Activated CD4-positive, alpha-beta memory T cell treated with anti-CD3 and anti-CD28 coated beads for 36 hours (primary cell): ENCODE measurements at regions of chr6 and their contacts with region 1.

Region 1: DNA sequence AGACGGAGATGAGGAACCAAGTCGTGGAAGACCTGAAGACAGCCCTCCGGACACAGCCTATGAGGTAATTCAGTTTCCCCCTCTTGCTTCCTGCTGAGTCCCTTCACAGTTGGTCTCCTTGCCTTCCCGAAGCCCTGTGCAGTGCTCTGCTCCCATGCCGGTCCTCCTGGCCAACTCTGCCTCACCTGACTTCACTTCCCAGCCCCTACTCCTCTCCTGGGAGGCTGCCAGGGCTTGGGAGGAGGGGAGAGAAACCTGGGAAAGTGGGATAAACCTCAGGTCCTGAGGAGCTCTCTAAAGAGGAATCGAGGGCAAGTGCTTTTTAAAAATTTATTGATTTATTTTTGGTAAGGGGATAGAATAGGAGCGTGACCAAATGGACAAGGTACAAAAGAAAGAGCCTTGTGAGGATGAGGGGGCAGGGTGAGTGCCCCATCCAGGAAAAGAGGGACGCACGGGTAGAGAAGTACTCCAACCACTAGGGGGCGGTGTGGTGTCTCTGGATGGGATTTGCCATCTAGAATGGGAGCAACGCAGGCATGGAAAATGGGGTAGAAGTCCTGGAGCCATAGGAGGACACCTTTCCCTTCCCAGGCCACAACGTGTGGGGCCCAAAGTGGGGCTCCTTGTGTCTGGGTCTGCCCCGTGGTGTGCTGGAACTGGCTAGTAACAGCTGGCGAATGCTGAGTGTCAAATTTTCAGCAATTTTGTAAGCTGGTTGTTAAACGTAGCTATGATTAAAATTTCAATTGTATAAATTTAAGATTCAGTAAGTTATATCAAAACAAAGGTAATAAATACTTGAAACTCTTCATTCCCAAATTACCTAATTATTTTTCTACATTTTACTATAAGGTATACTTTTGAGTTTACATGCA is 69.0 kb downstream of the MOCS1 start:
- DNase-seq: peak; percentile 65
- H3K4me3 Mint-ChIP-seq: no peak overlapping the region
- H3K27ac Mint-ChIP-seq: no peak overlapping the region
- H3K4me1 Mint-ChIP-seq: no peaks in the 10 kb centered on the region
- H3K27me3 Mint-ChIP-seq: peaks cover 8% of the 10 kb centered on the region

Region 2: GRCh38 chr6:39361657-39362486 is 503.4 kb before region 1 on chr6:
- CTCF ChIA-PET with region 1: interaction called, 12 read pairs
- POLR2A ChIA-PET with region 1: no interaction called
- intact Hi-C with region 1: no loop called
- DNase-seq: peak; percentile 56
- H3K4me3 Mint-ChIP-seq: no peak overlapping the region
- H3K27ac Mint-ChIP-seq: no peak overlapping the region
- H3K4me1 Mint-ChIP-seq: peaks cover 3% of the 10 kb centered on the region
- H3K27me3 Mint-ChIP-seq: peaks cover 4% of the 10 kb centered on the region

Region 3: DNA sequence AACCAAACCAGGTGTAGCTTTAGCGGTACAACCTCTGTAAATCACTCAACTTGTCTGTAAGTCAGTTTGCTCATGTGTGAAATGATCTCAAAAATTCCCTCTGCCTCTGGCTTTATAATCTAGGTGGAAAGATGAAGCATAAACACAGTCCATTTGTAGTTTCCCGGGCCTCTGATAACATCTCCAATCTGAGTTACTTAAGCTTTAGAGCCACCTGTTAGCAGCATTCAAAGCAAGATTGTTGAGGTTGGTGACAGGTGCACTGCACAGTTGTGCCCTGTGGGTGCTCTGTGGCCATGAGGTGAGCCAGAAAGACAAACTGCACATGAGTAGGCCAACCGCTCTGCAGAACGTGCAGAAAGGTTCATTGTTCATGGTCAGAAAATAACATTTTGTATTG is 15.3 kb after region 1 on chr6:
- CTCF ChIA-PET with region 1: interaction called, 10 read pairs
- POLR2A ChIA-PET with region 1: no interaction called
- intact Hi-C with region 1: no loop called
- DNase-seq: no peak
- H3K4me3 Mint-ChIP-seq: no peak overlapping the region
- H3K27ac Mint-ChIP-seq: no peak overlapping the region
- H3K4me1 Mint-ChIP-seq: no peaks in the 10 kb centered on the region
- H3K27me3 Mint-ChIP-seq: peaks cover 3% of the 10 kb centered on the region

Region 4: GRCh38 chr6:40308533-40309306 is 443.5 kb after region 1 on chr6:
- CTCF ChIA-PET with region 1: interaction called, 3 read pairs
- POLR2A ChIA-PET with region 1: no interaction called
- intact Hi-C with region 1: loop called (anchors 10 kb)
- DNase-seq: peak; percentile 68
- H3K4me3 Mint-ChIP-seq: no peak overlapping the region
- H3K27ac Mint-ChIP-seq: no peak overlapping the region
- H3K4me1 Mint-ChIP-seq: no peaks in the 10 kb centered on the region
- H3K27me3 Mint-ChIP-seq: peaks cover 37% of the 10 kb centered on the region